ENCODE measurements at regions of chr9 and their contacts with region 1.

Region 1: DNA sequence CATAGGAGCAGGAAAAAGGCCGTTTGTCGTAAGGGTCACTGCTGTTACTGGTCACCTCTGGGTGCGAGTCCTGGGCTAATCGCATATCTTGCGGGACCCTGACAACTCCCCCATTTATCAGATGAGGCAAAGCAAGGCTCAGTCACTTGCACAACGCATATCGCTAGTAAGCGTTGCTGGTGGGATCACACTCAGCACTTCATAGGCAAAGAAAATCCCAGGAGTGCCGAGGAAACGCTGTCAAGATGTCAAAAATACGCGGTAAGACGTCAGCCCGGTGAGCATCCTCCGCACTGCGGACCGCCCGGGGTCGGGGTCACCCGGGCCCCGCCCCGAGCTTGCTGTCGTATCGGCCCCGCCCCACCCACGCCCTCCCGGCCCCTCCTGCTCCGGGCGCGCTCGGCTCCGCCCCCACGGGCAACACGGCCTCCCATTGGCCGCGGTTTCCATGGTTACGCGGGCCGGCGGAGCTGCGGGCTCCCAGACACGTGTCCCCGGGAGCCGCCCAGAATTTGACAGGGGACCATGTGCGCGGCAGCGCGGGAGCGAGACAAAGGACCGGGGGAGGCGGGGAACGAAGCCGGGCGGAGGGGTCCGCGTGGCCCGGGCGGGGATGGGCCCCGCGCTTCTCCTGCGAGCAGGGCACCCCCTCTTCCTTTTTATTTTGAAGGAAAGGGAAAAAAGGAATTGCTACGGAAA is 80.2 kb upstream of the IER5L start:
- DNase-seq: peak; percentile 97 to 98 (median 98)
- ATAC-seq: peak; percentile 91 to 95
- H3K4me3 ChIP-seq: peak overlapping the region; percentile 36
- H3K27ac ChIP-seq: peak overlapping the region; percentile 22
- H3K4me1 ChIP-seq: peaks cover 5% of the 10 kb centered on the region
- H3K27me3 ChIP-seq: no peaks in the 10 kb centered on the region

Region 2: DNA sequence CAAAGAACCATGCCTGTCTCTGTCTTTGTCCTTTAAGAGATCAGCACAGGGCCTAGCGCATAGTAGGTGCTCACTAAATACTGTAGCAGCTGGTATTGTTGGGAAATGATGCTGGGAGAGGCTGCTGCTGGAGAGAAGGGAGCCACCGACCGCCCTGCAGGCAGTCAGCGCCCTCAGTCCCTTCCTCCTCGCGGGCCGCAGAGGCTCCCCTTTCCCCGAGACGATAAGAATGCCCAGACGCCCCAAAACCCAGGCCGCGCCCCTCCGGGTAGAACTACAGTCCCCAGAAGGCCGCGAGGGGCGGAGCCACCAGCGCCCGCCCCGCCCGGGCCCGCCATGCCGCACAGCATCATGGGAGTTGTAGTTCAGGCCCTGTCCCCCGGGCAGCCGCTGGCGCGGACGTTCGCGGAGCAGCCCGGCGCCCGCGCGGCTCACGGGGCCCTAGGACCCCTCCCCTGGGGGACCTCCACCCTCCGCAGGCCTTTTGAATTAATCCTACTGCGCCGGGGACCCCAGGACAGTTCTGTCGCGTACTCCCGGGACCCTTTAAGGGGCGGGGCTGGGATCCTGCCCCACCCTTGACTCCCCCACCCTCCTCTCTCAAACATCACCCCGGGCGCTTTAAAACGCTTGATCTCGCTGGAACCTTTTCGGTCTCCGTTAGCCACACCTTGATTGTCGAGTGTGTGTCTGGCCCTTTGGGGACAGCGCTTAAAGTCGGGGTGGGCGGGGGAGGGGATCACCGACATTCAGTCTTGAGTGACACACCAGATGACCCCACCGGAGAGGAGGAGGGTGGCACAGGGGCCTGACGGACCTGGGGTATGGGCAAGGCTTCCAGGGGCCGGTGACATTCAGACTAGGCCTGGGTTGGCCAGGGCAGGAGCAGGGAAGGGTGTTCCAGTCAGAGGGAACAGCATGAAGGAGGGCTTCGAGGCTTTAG is 55.4 kb before region 1 on chr9:
- intact Hi-C with region 1: loop called in 2 of 4 experiments (anchors 10 kb)
- DNase-seq: peak; percentile 90 to 95 (median 95)
- ATAC-seq: peak; percentile 94 to 95
- H3K4me3 ChIP-seq: peak overlapping the region; percentile 62
- H3K27ac ChIP-seq: peak overlapping the region; percentile 84
- H3K4me1 ChIP-seq: peaks cover 2% of the 10 kb centered on the region
- H3K27me3 ChIP-seq: no peaks in the 10 kb centered on the region

Region 3: GRCh38 chr9:129278391-129279237 is 20.3 kb after region 1 on chr9:
- intact Hi-C with region 1: no loop called
- DNase-seq: no peak
- ATAC-seq: no peak
- H3K4me3 ChIP-seq: no peak overlapping the region
- H3K27ac ChIP-seq: no peak overlapping the region
- H3K4me1 ChIP-seq: peaks cover 2% of the 10 kb centered on the region
- H3K27me3 ChIP-seq: no peaks in the 10 kb centered on the region

Region 4: GRCh38 chr9:129320575-129321263 is 62.4 kb after region 1 on chr9:
- intact Hi-C with region 1: loop called in 1 of 4 experiments (anchors 5 kb)
- DNase-seq: peak; percentile 67 to 91 (median 88)
- ATAC-seq: peak; percentile 81
- H3K4me3 ChIP-seq: peak overlapping the region; percentile 17
- H3K27ac ChIP-seq: peak overlapping the region; percentile 88
- H3K4me1 ChIP-seq: peaks cover 5% of the 10 kb centered on the region
- H3K27me3 ChIP-seq: no peaks in the 10 kb centered on the region